Mammary epithelial cell (primary cell): ENCODE measurements at regions of chr4 and their contacts with region 1.

Region 1: DNA sequence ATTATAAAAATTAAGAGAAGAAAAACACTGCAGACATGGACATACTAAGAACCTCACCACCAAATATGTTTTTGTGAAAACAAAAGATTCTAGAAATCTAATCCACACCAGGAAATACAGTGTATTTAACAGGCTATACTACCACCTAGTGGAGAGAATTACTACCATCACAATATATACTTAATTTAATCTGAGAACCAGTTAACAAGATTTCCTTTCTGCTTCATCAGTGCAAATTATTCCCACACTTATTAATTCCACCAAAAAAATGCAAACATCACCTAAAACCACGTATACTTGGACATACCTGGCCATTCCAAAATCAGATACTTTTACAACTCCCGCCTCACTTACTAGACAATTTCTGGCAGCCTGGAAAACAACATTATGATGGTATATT is 7.0 kb upstream of the TXK start:
- DNase-seq: peak; percentile 20
- H3K4me3 ChIP-seq: no peak overlapping the region
- H3K27ac ChIP-seq: no peak overlapping the region
- H3K4me1 ChIP-seq: no peaks in the 10 kb centered on the region
- H3K27me3 ChIP-seq: no peaks in the 10 kb centered on the region
- CTCF ChIP-seq: peak; percentile 44 to 51

Region 2: GRCh38 chr4:47737326-47737725 is 403.7 kb before region 1 on chr4:
- CTCF ChIA-PET with region 1: interaction called, 10 read pairs
- dilution Hi-C with region 1: no loop called
- in situ Hi-C with region 1: no loop called
- intact Hi-C with region 1: no loop called
- DNase-seq: no peak
- H3K4me3 ChIP-seq: no peak overlapping the region
- H3K27ac ChIP-seq: no peak overlapping the region
- H3K4me1 ChIP-seq: no peaks in the 10 kb centered on the region
- H3K27me3 ChIP-seq: peaks cover 12% of the 10 kb centered on the region
- CTCF ChIP-seq: no peak

Region 3: DNA sequence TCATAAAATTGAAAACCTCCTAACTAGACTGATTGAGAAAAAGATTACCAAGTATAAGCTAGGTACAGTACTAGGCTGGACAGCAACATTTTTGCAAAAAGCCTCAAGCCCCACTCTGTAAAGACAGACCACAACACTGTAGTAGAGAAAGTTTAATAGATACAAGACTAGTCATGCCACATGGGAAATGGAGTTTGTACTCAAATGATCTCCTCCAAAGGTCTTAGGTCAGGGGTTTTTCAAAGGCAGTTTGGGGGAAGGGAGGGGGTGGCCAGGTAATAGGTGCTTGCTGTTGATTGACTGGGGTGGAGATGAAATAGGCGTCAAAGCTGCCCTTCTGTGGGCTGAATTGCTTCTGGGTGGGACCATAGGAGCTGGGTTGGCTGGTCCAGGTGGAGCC is 138.8 kb before region 1 on chr4:
- CTCF ChIA-PET with region 1: no interaction called
- dilution Hi-C with region 1: no loop called
- in situ Hi-C with region 1: no loop called
- intact Hi-C with region 1: loop called (anchors 2 kb)
- DNase-seq: no peak
- H3K4me3 ChIP-seq: no peak overlapping the region
- H3K27ac ChIP-seq: no peak overlapping the region
- H3K4me1 ChIP-seq: no peaks in the 10 kb centered on the region
- H3K27me3 ChIP-seq: no peaks in the 10 kb centered on the region
- CTCF ChIP-seq: no peak

Region 4: GRCh38 chr4:48033825-48034413 is 107.1 kb before region 1 on chr4:
- CTCF ChIA-PET with region 1: no interaction called
- dilution Hi-C with region 1: no loop called
- in situ Hi-C with region 1: loop called in 1 of 2 experiments (anchors 25 kb)
- intact Hi-C with region 1: loop called (anchors 5 kb)
- DNase-seq: peak; percentile 34
- H3K4me3 ChIP-seq: no peak overlapping the region
- H3K27ac ChIP-seq: no peak overlapping the region
- H3K4me1 ChIP-seq: no peaks in the 10 kb centered on the region
- H3K27me3 ChIP-seq: no peaks in the 10 kb centered on the region
- CTCF ChIP-seq: peak; percentile 73 to 76

Region 5: GRCh38 chr4:48093949-48094550 is 47.0 kb before region 1 on chr4:
- CTCF ChIA-PET with region 1: no interaction called
- dilution Hi-C with region 1: no loop called
- in situ Hi-C with region 1: no loop called
- intact Hi-C with region 1: loop called (anchors 5 kb)
- DNase-seq: peak; percentile 93
- H3K4me3 ChIP-seq: no peak overlapping the region
- H3K27ac ChIP-seq: peak overlapping the region; percentile 58
- H3K4me1 ChIP-seq: peaks cover 16% of the 10 kb centered on the region
- H3K27me3 ChIP-seq: no peaks in the 10 kb centered on the region
- CTCF ChIP-seq: no peak

Region 6: DNA sequence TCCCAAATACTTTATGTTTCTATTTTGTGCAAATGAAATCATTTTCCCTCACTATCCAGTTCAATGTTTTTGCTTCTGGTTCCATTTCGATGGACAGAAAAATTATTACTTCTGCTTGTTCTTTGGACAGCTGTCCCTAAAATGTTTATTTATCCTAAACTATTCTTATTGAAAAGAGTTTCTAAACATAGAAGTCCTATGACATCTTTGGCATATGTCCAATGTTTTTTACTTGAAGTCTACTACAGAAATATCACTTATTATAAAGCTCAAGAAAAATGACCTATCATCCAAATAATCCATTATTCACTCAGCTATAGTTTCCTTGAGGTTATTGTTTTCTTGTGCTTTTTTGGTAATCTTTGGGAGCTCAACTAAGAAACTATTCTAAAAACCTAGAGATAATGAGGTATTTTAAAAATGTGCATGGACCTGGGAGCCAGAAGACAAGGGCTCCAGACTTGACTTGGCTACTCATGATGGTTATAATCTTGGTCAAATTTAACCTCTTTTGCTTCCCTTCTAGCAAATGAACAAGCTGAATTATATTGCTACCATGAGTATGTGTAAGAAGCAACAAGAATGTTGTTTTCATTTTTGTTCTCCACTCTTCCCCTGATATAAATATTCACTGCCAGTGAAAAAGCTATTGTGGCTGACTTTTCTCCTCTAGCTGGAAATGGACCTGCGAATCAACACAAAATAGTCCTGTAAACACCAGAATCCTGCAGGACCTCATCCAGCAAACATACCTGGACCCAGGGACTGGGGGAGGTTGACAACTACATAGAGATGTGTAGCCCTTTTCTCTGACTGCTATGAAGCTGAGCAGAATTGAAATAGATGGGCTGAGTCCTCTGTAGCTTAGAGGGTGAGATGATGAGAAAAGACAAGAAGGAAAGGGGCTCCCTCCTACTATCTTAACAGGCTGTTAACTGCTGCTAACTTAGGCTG is 501.6 kb after region 1 on chr4:
- CTCF ChIA-PET with region 1: no interaction called
- dilution Hi-C with region 1: no loop called
- in situ Hi-C with region 1: no loop called
- intact Hi-C with region 1: no loop called
- DNase-seq: no peak
- H3K4me3 ChIP-seq: no peak overlapping the region
- H3K27ac ChIP-seq: no peak overlapping the region
- H3K4me1 ChIP-seq: no peaks in the 10 kb centered on the region
- H3K27me3 ChIP-seq: no peaks in the 10 kb centered on the region
- CTCF ChIP-seq: no peak